K562 (cell line): ENCODE measurements at regions of chr17 and their contacts with region 1.

Region 1: DNA sequence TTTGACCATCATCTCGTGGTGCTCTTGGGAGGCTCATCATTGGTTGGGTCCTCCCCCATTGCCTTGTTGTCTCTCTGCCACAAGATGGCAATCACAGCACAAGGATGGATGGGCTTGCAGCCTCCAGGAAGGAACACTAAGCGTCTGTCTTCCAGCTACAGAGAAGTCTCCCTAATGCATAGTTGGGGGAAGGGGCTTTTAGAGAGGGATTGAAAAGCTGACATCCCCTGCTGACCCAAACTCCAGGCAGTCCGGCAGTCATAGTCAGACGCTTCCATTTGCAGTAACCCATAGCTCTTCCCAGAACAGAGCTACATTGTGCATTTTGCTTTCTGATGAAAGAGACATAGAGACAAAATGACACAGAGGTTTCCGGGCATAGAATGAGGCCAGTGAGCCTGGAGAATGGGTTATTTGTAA is 111.4 kb downstream of the UTP18 start:
- DNase-seq: peak; percentile 63 to 65 (median 64)
- ATAC-seq: peak; percentile 91
- H3K4me3 ChIP-seq: peak overlapping the region; percentile 20
- H3K27ac ChIP-seq: no peak overlapping the region
- H3K4me1 ChIP-seq: no peaks in the 10 kb centered on the region; a peak in 1 of 5 replicates
- H3K27me3 ChIP-seq: peaks cover 0 to 7% of the 10 kb centered on the region in 2 experiments; a peak in 1 of 5 replicates
- CTCF ChIP-seq: peak; percentile 74 to 82 (median 75)
- EP300 ChIP-seq: no peak
- POLR2A ChIP-seq: no peak
- RAD21 ChIP-seq: peak; percentile 88 to 94

Region 2: DNA sequence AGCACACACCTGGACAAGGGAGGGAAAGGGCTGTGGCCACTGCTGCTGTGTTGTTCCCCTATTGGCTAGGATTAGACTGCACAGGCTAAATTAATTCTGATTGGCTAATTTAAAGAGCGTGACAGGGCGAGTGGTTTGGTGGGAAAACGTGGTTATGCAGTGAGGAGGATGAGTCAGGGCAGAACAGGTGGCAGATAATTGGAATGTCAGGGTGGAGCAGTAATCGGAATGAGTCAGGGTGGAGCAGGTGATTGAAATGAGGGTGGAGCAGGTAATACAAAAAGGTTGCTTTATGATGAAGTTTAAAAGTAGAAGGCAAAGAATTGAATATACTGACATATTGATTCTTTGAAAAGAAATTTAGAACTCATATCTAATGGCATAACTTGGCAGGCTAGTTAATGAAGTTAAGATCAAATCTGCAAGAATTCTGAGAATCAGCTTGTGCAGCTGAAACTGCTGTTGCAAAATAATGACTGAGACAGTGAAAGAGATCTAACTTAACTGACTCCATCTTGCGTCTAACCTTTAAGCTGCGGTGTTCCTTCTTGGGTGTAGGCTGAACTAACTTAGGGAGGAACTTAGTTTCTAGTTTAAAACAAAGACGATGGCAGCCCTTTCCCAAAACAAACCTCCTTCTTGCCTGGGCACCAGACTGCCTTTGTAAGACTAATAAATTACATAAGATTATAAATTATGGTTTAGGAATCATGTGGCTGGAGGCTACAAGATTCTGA is 62.9 kb after region 1 on chr17:
- CTCF ChIA-PET with region 1: no interaction called
- POLR2A ChIA-PET with region 1: no interaction called
- in situ Hi-C with region 1: no loop called
- intact Hi-C with region 1: loop called (anchors 5 kb)
- DNase-seq: peak in 2 of 4 experiments; percentile 8 to 10
- ATAC-seq: no peak
- H3K4me3 ChIP-seq: no peak overlapping the region
- H3K27ac ChIP-seq: no peak overlapping the region
- H3K4me1 ChIP-seq: no peaks in the 10 kb centered on the region; a peak in 2 of 5 replicates
- H3K27me3 ChIP-seq: no peaks in the 10 kb centered on the region
- CTCF ChIP-seq: no peak
- EP300 ChIP-seq: no peak
- POLR2A ChIP-seq: no peak
- RAD21 ChIP-seq: no peak

Region 3: DNA sequence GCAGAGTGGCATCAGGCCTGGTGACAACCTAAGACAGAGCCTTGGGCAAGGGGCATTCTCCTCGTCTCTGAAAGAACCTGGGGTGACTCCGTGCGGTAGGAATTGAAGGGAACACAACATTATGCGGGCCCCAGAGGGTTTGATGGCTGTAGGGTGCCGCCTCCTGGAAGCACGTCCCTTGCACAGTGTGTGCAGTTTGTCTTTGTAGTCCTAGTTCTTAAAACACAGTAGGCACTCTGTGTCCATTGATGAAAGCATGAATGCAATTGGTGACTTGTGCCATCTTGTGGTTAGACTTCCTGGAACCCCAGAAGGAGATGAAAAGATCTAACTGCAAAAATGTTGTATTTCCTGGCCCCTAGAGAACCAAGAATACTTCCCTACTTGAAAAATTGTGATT is 168.4 kb after region 1 on chr17:
- CTCF ChIA-PET with region 1: interaction called, 11 read pairs
- POLR2A ChIA-PET with region 1: no interaction called
- in situ Hi-C with region 1: no loop called
- intact Hi-C with region 1: loop called (anchors 1 kb)
- DNase-seq: peak in 2 of 4 experiments; percentile 7 to 8
- ATAC-seq: peak; percentile 58; the same call in 2 of the 3 replicates
- H3K4me3 ChIP-seq: no peak overlapping the region
- H3K27ac ChIP-seq: no peak overlapping the region
- H3K4me1 ChIP-seq: no peaks in the 10 kb centered on the region
- H3K27me3 ChIP-seq: no peaks in the 10 kb centered on the region
- CTCF ChIP-seq: peak; percentile 31 to 48 (median 40); a peak in 4 of 6 replicates
- EP300 ChIP-seq: no peak
- POLR2A ChIP-seq: no peak
- RAD21 ChIP-seq: peak; percentile 52 to 53

Region 4: GRCh38 chr17:52106638-52107261 is 735.0 kb after region 1 on chr17:
- CTCF ChIA-PET with region 1: interaction called, 3 read pairs
- POLR2A ChIA-PET with region 1: no interaction called
- in situ Hi-C with region 1: no loop called
- intact Hi-C with region 1: loop called (anchors 10 kb)
- DNase-seq: peak; percentile 34 to 43 (median 41)
- ATAC-seq: no peak
- H3K4me3 ChIP-seq: no peak overlapping the region
- H3K27ac ChIP-seq: no peak overlapping the region
- H3K4me1 ChIP-seq: no peaks in the 10 kb centered on the region
- H3K27me3 ChIP-seq: no peaks in the 10 kb centered on the region
- CTCF ChIP-seq: peak; percentile 28 to 68 (median 57); a peak in 5 of 6 replicates
- EP300 ChIP-seq: no peak
- POLR2A ChIP-seq: no peak
- RAD21 ChIP-seq: peak; percentile 29 to 62; a peak in 3 of 4 replicates